Colonic mucosa (tissue), 4 donors: ENCODE measurements at regions of chr11 and their contacts with region 1.

Region 1: DNA sequence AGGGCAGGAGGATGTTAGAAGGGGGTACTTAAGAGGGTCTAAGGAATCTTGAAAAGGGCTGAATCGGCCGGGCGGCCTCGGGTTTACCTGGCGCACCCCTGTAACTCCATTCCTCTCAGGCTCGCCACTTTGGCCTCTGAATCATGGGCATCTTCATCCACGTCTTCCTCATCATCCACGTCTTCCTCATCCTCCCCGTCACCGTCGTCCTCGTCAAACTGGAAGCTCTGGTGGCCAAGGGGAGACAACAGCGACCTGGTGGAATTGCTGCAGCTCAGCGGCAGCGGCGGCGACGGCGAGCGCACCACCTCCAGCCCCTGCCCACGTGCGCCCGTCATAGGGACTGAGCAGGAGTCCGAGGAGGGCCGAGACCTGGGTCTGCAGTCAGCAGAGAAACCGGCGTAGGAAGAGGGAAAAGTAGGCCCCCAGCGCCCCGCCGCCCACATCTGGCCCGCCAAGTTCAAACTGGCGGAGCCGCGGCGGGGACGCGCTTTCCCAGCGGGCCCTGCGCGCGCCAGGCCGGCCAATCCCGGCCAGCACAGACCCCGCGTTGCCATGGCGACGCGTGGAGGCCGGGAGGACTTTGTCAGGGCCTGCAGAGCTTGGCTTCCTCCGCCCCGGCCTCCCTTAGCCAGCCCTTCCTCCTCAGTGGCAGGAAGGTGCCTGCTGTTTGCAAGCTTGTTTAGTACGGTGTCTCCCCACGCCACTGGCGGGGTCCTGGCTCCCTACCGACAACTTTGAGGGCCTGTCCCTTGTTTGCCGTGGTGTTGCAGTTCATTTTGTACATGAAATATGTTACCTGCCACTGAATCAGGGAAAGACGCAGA is at the start of gene CCDC34:
- DNase-seq: peak; percentile 93
- H3K4me3 ChIP-seq: peak within 1 kb of the TSS; percentile 79
- H3K27ac ChIP-seq: peak within 1 kb of the TSS; percentile 57
- H3K4me1 ChIP-seq: peaks cover 10% of the 10 kb centered on the region
- H3K27me3 ChIP-seq: no peaks in the 10 kb centered on the region
- CTCF ChIP-seq: no peak
- total RNA-seq, gene CCDC34: 10.2 to 25.6 TPM

Region 2: DNA sequence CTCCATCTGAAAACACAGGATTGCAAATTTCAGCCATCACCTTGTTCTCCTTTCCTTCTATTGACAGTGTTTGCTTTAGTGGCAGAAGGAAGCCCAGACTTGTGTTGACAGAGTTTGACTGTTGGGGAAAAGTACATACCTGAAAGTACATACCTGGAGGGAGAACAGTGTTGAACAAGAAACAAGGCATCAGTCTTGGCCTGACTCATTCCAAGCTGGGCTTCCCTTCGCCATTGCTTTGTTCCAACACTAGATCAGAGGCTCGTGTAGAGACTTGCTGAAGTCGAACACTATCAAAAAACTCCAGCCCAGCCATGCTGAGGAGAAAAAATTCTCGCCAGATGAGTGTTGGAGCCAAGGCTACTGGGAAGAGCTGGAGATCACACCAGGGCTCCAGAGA is 188.9 kb before region 1 on chr11:
- intact Hi-C with region 1: no loop called
- DNase-seq: no peak
- H3K4me3 ChIP-seq: no peak overlapping the region
- H3K27ac ChIP-seq: no peak overlapping the region
- H3K4me1 ChIP-seq: no peaks in the 10 kb centered on the region
- H3K27me3 ChIP-seq: no peaks in the 10 kb centered on the region
- CTCF ChIP-seq: no peak

Region 3: GRCh38 chr11:27201454-27202236 is 161.3 kb before region 1 on chr11:
- intact Hi-C with region 1: no loop called
- DNase-seq: peak; percentile 97
- H3K4me3 ChIP-seq: no peak overlapping the region
- H3K27ac ChIP-seq: peak overlapping the region; percentile 90
- H3K4me1 ChIP-seq: peaks cover 5% of the 10 kb centered on the region
- H3K27me3 ChIP-seq: no peaks in the 10 kb centered on the region
- CTCF ChIP-seq: no peak

Region 4: DNA sequence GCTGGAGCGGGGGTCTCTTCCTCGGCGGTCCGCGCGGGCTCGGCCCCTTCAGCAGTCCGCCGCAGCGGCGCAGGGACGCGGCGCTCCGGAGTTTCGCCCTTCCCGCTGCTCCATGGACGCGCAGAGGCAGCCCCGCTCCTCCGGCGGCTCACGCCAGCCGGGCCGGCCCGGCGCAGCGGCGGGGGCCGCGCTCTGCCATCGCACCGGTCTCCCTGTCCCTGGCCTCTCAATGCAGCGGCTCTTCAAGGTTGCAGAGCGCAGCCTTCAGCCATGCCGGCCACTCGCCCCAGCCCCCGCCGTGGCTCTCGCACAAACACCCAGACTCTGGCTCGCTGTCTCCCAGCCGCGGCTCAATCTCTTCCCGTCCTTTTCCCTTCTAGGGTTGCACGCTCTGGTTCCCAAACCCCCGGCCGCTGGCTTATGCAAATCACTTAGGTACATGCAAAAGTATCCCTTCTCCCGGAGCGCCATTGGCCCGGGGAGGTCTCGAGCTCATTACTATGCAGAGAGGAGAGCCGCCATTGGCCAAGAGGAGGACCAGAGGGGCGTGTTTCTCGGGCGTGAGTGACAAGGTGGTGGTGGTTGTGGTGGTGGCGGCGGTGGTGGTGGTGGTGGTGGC is 109.5 kb after region 1 on chr11 and contains the start of gene LGR4:
- intact Hi-C with region 1: loop called (anchors 10 kb)
- DNase-seq: peak; percentile 98
- H3K4me3 ChIP-seq: peak within 1 kb of the TSS; percentile 74
- H3K27ac ChIP-seq: peak within 1 kb of the TSS; percentile 91
- H3K4me1 ChIP-seq: no peaks in the 10 kb centered on the region
- H3K27me3 ChIP-seq: no peaks in the 10 kb centered on the region
- CTCF ChIP-seq: no peak
- total RNA-seq, gene LGR4: 88.2 to 94.5 TPM

Region 5: GRCh38 chr11:27916541-27917100 is 553.7 kb after region 1 on chr11:
- intact Hi-C with region 1: no loop called
- DNase-seq: no peak
- H3K4me3 ChIP-seq: no peak overlapping the region
- H3K27ac ChIP-seq: no peak overlapping the region
- H3K4me1 ChIP-seq: no peaks in the 10 kb centered on the region
- H3K27me3 ChIP-seq: no peaks in the 10 kb centered on the region
- CTCF ChIP-seq: no peak